ENCODE measurements at regions of chr11 and their contacts with region 1.

Region 1: DNA sequence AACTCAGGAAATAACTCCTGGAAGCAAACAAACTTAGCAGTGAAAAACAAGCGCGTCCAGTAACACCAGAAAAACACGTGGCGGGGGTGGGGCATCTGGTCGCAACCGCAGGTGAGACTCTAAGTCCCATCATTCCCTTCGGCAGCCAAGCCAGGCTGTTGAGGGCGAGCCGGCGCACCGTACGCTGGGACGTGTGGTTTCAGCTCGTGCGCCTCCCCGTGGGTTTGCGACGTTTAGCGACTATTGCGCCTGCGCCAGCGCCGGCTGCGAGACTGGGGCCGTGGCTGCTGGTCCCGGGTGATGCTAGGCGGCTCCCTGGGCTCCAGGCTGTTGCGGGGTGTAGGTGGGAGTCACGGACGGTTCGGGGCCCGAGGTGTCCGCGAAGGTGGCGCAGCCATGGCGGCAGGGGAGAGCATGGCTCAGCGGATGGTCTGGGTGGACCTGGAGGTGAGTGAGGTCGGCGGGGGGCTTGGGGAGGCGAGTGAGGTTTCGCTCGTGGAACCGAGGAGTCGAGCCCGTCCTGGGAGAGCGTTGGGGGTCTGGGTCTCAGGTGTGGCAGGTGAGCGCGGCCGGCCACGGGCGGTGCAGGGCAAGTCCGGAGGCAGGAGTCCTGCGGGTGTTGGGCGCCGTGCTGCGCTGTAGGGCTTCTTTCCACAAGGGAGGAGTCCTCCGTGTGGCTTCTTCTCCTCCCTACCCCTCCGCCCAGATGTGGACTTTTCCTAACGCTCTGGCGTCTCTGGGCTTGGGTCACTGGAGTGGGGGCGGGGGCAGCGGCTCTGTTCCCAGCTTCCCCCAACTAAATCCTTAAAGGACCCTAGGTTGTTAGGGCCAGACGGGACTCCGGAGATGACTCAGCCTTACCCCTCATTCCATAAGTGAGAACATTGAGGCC is at the start of gene REXO2:
- DNase-seq: peak; percentile 95
- H3K4me3 ChIP-seq: peak within 1 kb of the TSS; percentile 95 to 100 (median 100)
- H3K27ac ChIP-seq: peak within 1 kb of the TSS; percentile 68
- H3K4me1 ChIP-seq: peaks cover 18% of the 10 kb centered on the region
- H3K27me3 ChIP-seq: no peaks in the 10 kb centered on the region
- CTCF ChIP-seq: peak; percentile 11 to 61
- total RNA-seq, gene REXO2: 119 to 180 TPM

Region 2: GRCh38 chr11:113681711-113682413 is 757.6 kb before region 1 on chr11:
- CTCF ChIA-PET with region 1: no interaction called
- dilution Hi-C with region 1: no loop called
- in situ Hi-C with region 1: no loop called
- intact Hi-C with region 1: loop called (anchors 10 kb)
- DNase-seq: no peak
- H3K4me3 ChIP-seq: no peak overlapping the region
- H3K27ac ChIP-seq: no peak overlapping the region
- H3K4me1 ChIP-seq: no peaks in the 10 kb centered on the region
- H3K27me3 ChIP-seq: no peaks in the 10 kb centered on the region
- CTCF ChIP-seq: no peak

Region 3: GRCh38 chr11:114295676-114296604 is 143.5 kb before region 1 on chr11 and contains the start of gene NNMT:
- CTCF ChIA-PET with region 1: no interaction called
- dilution Hi-C with region 1: no loop called
- in situ Hi-C with region 1: no loop called
- intact Hi-C with region 1: loop called (anchors 5 kb)
- DNase-seq: peak; percentile 89
- H3K4me3 ChIP-seq: peak within 1 kb of the TSS; percentile 48 to 93 (median 73)
- H3K27ac ChIP-seq: peak within 1 kb of the TSS; percentile 98
- H3K4me1 ChIP-seq: peaks cover 51% of the 10 kb centered on the region
- H3K27me3 ChIP-seq: no peaks in the 10 kb centered on the region
- CTCF ChIP-seq: peak in 1 of 2 donors; percentile 10
- total RNA-seq, gene NNMT: 131 to 605 TPM

Region 4: DNA sequence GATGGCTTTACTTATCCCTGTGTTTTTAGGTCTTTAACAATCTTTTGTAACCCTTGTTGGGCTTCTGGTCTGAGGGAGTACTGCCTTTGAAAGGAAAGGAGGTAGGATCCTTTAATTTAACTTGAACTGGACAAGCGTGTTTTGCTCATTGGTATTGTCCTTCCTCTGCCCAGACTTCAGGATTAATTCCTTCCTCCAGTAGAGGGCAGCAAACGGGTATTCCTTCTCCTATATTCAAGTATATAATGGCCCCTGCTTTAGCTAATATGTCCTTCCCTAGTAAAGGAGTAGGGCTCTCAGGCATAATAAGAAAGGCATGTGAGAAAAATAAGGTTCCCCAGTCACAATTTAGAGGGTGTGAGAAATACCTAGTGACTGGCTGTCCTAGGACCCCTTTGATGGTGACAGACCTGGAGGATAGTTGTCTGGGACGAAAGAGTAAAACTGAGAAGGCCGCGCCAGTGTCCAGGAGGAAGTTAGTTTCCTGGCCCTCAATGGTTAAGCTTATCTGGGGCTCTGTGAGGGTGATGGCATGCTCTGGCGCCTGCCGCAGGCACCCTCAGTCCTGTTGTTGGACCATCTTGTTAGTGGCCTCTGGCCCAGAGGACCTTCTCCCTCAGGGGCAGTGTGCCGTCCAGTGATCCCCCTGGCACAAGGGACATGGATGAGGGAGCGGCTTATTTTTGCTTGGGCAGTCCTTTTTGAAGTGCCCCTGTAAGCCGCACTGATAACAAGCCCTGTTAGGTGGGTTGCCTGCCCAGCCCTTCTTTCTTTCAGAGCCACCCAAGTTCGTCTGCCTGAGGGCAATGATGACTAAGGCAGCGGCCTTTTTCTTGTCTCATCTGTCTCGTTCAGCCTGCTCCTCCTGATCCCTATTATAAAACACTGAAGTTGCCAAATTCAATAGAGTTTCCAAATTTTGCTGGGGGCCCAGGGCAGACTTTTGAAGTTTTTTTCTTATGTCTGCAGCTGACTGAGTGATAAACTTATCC is 91.0 kb before region 1 on chr11:
- CTCF ChIA-PET with region 1: no interaction called
- dilution Hi-C with region 1: no loop called
- in situ Hi-C with region 1: no loop called
- intact Hi-C with region 1: loop called (anchors 1 kb)
- DNase-seq: peak; percentile 65
- H3K4me3 ChIP-seq: no peak overlapping the region
- H3K27ac ChIP-seq: no peak overlapping the region
- H3K4me1 ChIP-seq: peaks cover 15% of the 10 kb centered on the region
- H3K27me3 ChIP-seq: no peaks in the 10 kb centered on the region
- CTCF ChIP-seq: peak; percentile 48 to 62

Region 5: DNA sequence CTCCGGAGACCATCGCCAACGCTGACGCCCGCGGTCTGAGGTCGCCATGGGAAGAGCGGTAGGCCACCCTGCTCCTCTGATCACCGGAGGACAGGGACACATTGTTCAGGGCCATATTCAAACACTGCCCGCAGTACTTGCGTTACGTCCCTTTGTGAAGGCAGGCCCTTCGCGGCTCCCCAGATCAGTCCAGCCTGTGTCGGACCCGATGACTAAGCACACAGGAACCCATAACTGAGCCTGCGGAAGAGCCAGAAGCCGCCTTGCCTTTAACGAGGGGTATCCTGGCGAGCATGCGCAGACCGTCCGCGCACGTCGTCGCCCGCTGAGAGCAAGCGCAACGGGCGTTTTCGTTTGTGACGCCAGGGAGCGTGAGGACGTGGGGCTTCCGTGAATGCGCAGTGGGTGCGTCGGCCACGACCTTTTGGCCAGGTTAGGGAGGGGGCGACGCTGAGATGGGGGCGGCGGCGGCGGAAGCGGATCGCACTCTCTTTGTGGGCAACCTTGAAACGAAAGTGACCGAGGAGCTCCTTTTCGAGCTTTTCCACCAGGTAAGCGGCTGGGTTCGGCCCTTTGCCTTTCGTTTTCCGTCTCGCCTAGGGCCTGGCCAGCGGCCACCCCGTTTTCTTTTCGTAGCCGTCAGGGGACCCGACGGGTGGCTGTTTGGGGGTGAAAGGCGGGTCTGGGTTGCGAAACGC is 39.1 kb before region 1 on chr11 and contains the starts of genes C11orf71 and RBM7:
- CTCF ChIA-PET with region 1: interaction called, 4 read pairs
- dilution Hi-C with region 1: no loop called
- in situ Hi-C with region 1: loop called in 1 of 2 experiments (anchors 5 kb)
- intact Hi-C with region 1: loop called (anchors 1 kb)
- DNase-seq: peak; percentile 99
- H3K4me3 ChIP-seq: peak within 1 kb of the TSS; percentile 77 to 91 (median 89)
- H3K27ac ChIP-seq: peak within 1 kb of the TSS; percentile 99
- H3K4me1 ChIP-seq: peaks cover 4% of the 10 kb centered on the region
- H3K27me3 ChIP-seq: no peaks in the 10 kb centered on the region
- CTCF ChIP-seq: peak in 1 of 2 donors; percentile 9
- total RNA-seq, gene C11orf71: 1.2 to 2.0 TPM
- total RNA-seq, gene RBM7: 37.5 to 42.8 TPM

Region 6: DNA sequence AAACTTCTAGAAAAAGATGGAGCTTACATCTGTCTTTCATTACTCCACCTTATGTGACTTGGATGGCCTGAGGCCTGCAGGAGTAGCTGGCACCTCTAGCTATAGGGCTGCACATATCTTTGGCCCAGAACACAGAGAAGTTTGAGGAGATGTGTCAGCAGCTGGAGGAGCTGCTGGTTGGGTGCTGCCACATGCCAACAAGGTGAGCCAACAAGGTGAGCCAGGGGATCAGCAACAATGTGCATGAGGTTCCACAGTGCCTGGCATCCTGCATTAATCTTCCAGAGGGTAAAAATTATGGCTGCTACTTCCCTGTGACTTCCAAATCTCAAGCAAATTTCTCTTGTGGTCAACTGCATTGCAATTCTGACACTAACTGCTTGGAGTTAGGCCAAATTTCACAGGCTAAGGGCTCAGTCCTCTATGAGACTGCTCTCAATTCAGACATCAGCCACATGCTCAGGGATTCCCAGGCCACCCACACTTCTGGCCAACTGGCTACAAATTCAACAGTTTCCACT is 23.0 kb before region 1 on chr11:
- CTCF ChIA-PET with region 1: no interaction called
- dilution Hi-C with region 1: no loop called
- in situ Hi-C with region 1: no loop called
- intact Hi-C with region 1: loop called (anchors 1 kb)
- DNase-seq: peak; percentile 89
- H3K4me3 ChIP-seq: no peak overlapping the region
- H3K27ac ChIP-seq: peak overlapping the region; percentile 53
- H3K4me1 ChIP-seq: peaks cover 23% of the 10 kb centered on the region
- H3K27me3 ChIP-seq: no peaks in the 10 kb centered on the region
- CTCF ChIP-seq: no peak

Measured in mammary epithelial cell (primary cell).